Mucosa of descending colon (tissue), 3 donors: ENCODE measurements at regions of chr11 and their contacts with region 1.

Region 1: DNA sequence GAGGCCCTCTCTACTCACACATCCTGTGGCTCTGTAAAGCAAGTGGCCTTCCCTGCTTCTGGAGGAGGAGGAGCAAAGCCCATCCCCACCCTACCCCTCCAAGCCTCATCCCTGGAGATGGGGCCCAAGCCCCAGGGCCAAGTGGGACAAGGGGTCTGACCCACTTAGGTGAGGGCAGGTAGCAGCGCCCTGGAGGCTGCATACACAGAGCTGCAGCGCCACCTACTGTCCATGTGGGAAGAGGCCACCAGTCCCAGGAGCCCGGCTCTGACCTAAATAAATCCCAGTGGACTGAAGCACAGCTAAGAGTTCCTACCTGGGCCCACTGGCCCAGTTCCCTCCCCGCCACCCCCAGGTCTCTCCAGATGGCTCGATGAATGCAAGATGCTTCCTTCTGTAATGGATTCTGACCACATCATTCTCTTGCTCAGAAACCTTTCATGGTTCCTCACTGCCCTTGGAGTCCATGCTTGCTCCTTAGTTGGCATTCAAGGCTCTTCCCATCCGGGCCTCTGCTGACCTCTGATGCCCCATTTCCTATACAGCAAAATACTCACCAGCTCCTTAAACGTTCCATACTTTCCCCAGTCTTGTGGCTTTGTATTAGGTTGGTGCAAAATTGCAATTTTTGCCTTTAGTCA is 62.1 kb downstream of the THAP12 start:
- DNase-seq: peak; percentile 82 to 90 (median 88)
- ATAC-seq: peak; percentile 92
- H3K4me3 ChIP-seq: no peak overlapping the region
- H3K4me1 ChIP-seq: peaks cover 8% of the 10 kb centered on the region
- CTCF ChIP-seq: peak; percentile 82

Region 2: GRCh38 chr11:75896843-75897419 is 421.9 kb before region 1 on chr11:
- intact Hi-C with region 1: loop called in 1 of 2 experiments (anchors 5 kb)
- DNase-seq: no peak
- ATAC-seq: peak; percentile 67
- H3K4me3 ChIP-seq: no peak overlapping the region
- H3K4me1 ChIP-seq: no peaks in the 10 kb centered on the region
- CTCF ChIP-seq: peak; percentile 29

Region 3: DNA sequence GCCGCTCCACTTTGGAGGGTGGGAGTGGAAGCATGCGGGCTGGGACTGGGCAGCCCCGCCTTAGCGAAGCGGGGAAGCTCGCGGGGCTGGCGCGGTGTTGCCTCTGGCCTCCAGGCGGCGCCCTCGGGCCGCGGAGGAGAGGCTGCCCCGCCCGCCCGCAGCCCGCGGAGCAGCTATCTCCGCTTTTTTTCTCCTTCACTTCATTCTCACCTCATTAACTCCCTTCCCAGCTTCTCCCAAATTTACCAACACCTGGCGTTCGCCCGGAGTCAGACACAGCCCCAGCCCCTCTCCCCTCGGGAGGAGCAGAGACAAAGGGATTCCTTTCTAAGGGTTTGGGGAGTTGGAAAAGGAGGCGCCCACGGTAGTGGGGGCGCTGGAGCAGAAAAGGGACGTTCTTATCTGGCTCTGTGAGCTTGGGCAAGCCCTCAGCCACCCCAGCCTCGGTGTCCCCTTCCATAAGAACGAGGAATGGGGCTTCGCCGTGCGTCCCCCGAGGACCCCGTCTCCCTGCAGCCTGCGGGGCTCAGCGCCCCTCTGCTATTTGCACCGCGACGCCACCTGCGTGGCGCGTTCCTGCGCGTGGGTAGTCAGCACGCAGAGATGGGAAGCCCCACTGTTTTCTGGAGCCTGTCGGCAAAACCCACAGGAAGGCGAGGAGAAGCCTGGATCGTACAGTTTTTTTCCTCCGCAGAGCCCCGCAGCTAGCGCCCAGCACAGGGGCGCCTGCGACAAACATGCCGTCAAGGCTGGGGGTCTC is 111.0 kb before region 1 on chr11:
- intact Hi-C with region 1: loop called (anchors 2 to 10 kb)
- DNase-seq: peak; percentile 85 to 91 (median 85)
- ATAC-seq: peak; percentile 77
- H3K4me3 ChIP-seq: no peak overlapping the region
- H3K4me1 ChIP-seq: peaks cover 54% of the 10 kb centered on the region
- CTCF ChIP-seq: peak; percentile 94